A673 (cell line): ENCODE measurements at regions of chr11 and their contacts with region 1.

Region 1: GRCh38 chr11:2901854-2902783 is 16.5 kb upstream of the CDKN1C start:
- DNase-seq: peak; percentile 96
- H3K4me3 ChIP-seq: peak overlapping the region; percentile 65
- H3K27ac ChIP-seq: peak overlapping the region; percentile 78
- H3K4me1 ChIP-seq: peaks cover 15% of the 10 kb centered on the region
- H3K27me3 ChIP-seq: no peaks in the 10 kb centered on the region
- CTCF ChIP-seq: no peak

Region 2: GRCh38 chr11:2816941-2817421 is 85.1 kb before region 1 on chr11:
- CTCF ChIA-PET with region 1: no interaction called
- POLR2A ChIA-PET with region 1: no interaction called
- intact Hi-C with region 1: no loop called
- DNase-seq: no peak
- H3K4me3 ChIP-seq: no peak overlapping the region
- H3K27ac ChIP-seq: no peak overlapping the region
- H3K4me1 ChIP-seq: peaks cover 8% of the 10 kb centered on the region
- H3K27me3 ChIP-seq: no peaks in the 10 kb centered on the region
- CTCF ChIP-seq: no peak

Region 3: DNA sequence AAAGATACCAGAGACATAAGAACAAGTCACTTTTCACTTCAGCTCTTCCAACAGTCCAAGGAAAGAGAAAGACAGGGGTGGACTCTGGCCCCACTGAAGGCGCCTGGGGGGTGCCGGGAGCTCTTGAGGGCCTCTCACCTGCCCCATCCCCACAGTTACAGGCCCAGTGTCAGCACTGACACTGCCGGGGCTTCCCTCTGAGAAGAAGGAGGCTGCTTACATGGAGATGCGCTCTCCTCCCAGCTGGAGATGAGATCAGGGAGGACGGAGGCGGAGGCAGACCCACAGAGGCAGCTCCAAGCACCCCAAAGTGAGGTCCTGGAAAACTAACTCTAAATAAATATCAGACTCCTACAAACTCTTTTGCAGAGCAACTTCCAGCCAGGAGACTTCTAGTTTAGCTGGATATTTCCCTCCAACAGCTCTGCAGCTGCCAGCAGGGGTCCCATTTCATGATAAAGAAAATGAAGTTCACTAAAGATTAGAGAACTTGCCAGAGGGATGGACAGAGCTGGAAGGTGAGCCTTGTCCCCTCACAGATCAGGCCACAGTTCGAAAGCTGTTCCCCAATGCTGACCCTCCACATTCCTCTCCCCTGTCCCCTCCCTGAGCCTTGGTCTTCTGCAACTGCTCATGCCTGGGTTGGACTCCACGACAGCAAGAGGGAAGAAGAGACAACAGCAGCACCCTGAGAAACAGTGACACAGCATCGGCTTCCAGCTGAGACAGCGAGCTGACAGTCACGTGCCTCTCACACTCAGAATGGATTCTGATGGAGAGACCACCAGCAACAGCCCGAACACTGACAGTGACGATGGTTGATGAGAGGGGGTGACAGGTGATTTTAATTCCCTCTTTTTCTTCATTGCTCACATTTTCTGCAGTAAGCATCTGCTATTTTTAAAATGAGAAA is 149.3 kb after region 1 on chr11:
- CTCF ChIA-PET with region 1: interaction called, 10 read pairs
- POLR2A ChIA-PET with region 1: no interaction called
- intact Hi-C with region 1: no loop called
- DNase-seq: peak; percentile 72
- H3K4me3 ChIP-seq: no peak overlapping the region
- H3K27ac ChIP-seq: peak overlapping the region; percentile 75
- H3K4me1 ChIP-seq: peaks cover 44% of the 10 kb centered on the region
- H3K27me3 ChIP-seq: no peaks in the 10 kb centered on the region
- CTCF ChIP-seq: 0 out of 2 replicates have a peak, but pooled peaks have one; percentile 21